PC-9 (cell line): ENCODE measurements at regions of chr7 and their contacts with region 1.

Region 1: DNA sequence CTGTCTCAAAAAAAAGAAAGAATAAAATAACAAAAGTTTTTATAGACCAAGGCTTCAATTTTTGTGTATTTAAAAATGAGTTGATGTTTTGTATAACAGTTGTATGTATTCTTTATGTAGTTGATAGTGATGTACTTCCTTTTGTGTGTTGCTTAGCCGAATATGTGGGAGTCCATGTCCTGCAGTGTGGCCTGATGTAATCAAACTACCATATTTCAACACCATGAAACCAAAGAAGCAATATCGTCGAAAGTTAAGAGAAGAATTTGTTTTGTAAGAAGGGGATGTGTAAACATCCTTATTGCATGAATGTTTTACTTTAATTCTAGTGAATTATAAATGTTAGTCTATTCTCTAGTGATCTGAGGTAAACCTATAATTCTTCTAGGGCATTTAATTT is 56.6 kb downstream of the MPLKIP start:
- DNase-seq: no peak
- H3K4me3 ChIP-seq: no peak overlapping the region
- H3K27ac ChIP-seq: peak overlapping the region; percentile 14; the same call in 1 of the 2 replicates
- H3K4me1 ChIP-seq: no peaks in the 10 kb centered on the region
- H3K27me3 ChIP-seq: no peaks in the 10 kb centered on the region
- CTCF ChIP-seq: no peak

Region 2: GRCh38 chr7:39667341-39667923 is 410.4 kb before region 1 on chr7:
- CTCF ChIA-PET with region 1: no interaction called
- POLR2A ChIA-PET with region 1: interaction called, 10 read pairs
- intact Hi-C with region 1: no loop called
- DNase-seq: no peak
- H3K4me3 ChIP-seq: no peak overlapping the region
- H3K27ac ChIP-seq: no peak overlapping the region
- H3K4me1 ChIP-seq: no peaks in the 10 kb centered on the region
- H3K27me3 ChIP-seq: no peaks in the 10 kb centered on the region
- CTCF ChIP-seq: no peak